Common myeloid progenitor, CD34-positive (primary cell): ENCODE measurements at regions of chr6 and their contacts with region 1.

Region 1: DNA sequence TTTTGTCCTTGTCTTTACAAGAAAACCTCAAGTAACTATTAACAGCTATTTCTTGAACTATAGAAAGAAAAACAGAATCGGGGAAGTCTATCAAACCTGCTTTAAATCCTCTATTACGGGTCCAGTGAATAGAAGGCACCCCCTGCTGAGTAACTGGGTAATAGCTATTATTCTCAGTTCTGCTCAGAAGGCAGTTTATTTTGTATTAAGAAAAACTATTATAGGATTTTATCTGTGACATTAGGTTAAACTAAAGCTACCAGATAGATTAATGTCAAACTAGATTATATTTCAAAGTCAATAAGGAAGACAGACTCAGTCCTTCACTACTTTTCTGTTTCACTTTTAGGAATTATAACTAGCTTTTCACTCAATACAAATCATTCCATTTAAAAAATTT is 93.7 kb downstream of the DST start:
- DNase-seq: peak; percentile 21 to 45 (median 41)
- H3K4me3 ChIP-seq: no peak overlapping the region
- H3K27ac ChIP-seq: no peak overlapping the region
- H3K4me1 ChIP-seq: no peaks in the 10 kb centered on the region
- H3K27me3 ChIP-seq: no peaks in the 10 kb centered on the region

Region 2: GRCh38 chr6:56359201-56359899 is 189.7 kb before region 1 on chr6:
- CTCF ChIA-PET with region 1: interaction called, 18 read pairs
- POLR2A ChIA-PET with region 1: no interaction called
- DNase-seq: peak; percentile 75 to 89 (median 85)
- H3K4me3 ChIP-seq: no peak overlapping the region
- H3K27ac ChIP-seq: no peak overlapping the region
- H3K4me1 ChIP-seq: no peaks in the 10 kb centered on the region
- H3K27me3 ChIP-seq: no peaks in the 10 kb centered on the region